Posterior cingulate gyrus (tissue), 11 donors: ENCODE measurements at regions of chr15 and their contacts with region 1.

Region 1: DNA sequence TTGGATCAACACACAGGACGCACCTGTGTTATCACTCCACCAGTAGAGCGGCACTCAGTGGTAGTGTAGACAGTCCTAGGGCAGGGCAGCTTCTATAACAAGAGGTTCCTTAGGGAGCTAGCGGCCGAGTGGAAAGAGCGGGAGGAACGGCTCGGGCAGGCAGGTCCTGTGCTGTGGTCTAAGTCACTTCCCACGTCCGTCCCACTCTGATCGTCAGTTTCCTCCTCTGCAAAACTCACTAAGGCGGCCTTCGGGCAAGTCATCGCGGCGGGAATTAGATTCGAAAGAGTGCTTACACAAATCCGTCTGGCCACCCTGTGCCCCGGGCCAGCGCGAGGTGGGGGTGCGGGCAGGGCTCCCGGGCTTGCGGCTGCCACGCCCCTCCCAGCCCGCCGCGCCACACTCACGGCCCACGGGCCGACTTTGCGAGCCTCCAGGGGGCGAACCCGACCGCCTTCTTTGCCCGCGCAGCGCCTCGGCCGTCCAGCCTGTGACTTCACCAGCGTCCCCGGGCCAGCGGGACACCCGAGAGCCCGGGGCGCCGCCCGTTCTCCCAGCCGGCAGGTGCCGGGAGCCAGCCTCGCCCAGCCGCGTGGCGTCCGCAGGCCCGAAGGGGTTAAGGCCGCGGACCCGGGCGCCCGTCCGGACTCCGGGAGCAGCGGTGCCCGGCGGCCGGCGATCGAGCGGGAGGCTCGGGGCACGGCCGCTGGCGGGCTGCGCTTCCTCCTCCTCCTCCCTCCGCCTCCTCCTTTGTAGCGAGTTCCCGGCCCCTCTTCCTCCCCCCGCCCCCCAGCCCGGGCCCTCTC is 416 bp upstream of the CORO2B start:
- DNase-seq: peak; percentile 69 to 97 (median 82)

Region 2: DNA sequence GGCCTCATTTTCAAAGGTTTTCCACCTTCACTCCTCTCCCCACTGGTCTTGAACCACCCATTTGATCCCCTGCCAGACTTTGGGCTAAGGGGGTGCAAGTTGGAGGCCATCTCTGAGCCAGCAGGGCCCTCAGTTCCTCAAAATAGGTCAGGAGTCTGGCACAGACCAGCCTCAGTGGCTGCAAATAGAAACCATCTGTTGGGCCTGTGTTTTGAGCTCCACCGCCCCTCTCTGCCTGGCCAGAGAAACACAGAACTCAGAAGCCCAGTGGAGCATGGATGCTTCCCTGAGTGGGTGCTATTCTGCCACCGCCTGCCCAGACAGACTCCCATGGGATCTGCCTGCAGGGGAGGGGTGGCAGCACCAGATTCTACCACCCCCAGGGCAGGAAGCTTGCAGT is 56.8 kb after region 1 on chr15:
- intact Hi-C with region 1: loop called (anchors 2 kb)
- DNase-seq: peak; percentile 49 to 95 (median 68)

Region 3: GRCh38 chr15:68674975-68675374 is 96.6 kb after region 1 on chr15:
- intact Hi-C with region 1: loop called (anchors 1 kb)
- DNase-seq: peak in 3 of 10 donors; percentile 13 to 56 (median 18)